AG04449 (cell line): ENCODE measurements at regions of chr6 and their contacts with region 1.

Region 1: GRCh38 chr6:9428421-9429172 is 986.3 kb downstream of the TFAP2A start:
- DNase-seq: no peak
- H3K4me3 ChIP-seq: no peak overlapping the region
- CTCF ChIP-seq: no peak

Region 2: DNA sequence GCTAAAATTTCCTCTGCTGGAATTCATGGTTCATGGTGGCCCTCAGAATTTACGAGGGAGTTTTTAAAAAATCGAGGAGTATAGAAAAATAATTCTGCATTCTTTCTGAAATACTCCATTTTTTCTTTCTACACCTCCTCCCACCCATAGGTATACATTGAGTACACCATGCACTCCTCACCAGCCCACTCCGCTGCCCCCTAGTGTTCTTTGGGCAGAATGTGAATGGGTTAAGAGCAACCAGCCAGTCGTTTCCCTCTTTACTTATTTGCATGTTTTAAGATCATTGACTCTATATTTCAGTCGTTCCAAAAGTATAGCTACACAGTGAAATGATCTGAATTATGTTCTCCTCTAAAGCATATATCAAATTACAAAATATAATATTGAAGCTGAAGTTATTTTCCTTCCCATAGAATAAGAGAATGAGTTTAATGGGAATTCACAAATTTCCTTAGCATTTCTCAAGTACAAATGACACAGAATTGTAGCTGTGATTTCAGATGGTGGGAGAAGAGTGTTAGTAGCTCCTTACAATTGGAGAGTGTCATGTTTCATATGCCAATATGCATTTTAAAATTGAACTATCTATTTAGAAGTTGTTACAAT is 15.5 kb before region 1 on chr6:
- CTCF ChIA-PET with region 1: interaction called, 11 read pairs
- POLR2A ChIA-PET with region 1: no interaction called
- DNase-seq: no peak
- H3K4me3 ChIP-seq: no peak overlapping the region
- CTCF ChIP-seq: peak; percentile 33

Region 3: DNA sequence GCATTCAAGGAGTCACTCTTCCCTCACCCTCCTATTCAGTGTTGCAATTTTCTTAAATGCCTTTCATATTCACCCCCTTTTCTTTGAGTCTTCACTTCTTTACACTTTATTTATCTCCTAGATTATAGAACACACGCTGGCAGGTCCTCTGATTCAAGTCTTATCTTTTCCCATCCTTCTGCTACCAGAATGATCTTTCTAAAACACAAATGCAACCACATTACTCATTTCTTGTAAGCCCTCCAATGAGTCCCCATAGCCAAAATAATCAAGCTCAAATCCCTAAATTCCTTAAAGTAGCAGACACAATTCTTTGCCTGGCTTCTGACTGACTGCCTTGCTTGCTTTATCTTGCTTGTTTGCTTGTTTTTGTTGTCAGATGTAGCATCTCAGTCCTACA is 66.3 kb after region 1 on chr6:
- CTCF ChIA-PET with region 1: no interaction called
- POLR2A ChIA-PET with region 1: no interaction called
- DNase-seq: no peak
- H3K4me3 ChIP-seq: no peak overlapping the region
- CTCF ChIP-seq: no peak

Region 4: GRCh38 chr6:9583753-9584352 is 155.3 kb after region 1 on chr6:
- CTCF ChIA-PET with region 1: no interaction called
- POLR2A ChIA-PET with region 1: no interaction called
- DNase-seq: no peak
- H3K4me3 ChIP-seq: no peak overlapping the region
- CTCF ChIP-seq: no peak

Region 5: DNA sequence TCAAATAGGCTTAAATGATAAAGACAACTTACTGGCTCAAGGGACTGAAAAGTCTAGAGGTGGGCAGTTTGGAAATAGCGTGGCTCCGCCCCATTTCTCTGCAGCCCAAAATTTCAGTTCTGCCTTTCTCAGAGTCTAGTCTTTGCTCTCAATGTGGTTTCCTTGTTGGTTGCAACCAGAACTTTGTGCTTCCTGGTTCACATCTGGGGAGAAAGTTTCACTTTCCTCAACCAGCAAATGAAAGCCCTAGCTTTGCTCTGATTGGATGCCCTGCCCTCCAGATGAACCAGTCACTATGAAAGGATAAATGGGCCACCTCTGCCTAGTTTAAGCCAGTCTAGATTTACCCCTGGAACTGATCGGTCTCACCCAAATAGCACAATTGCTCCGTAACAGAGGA is 1473.2 kb after region 1 on chr6:
- CTCF ChIA-PET with region 1: no interaction called
- POLR2A ChIA-PET with region 1: no interaction called
- DNase-seq: no peak
- H3K4me3 ChIP-seq: no peak overlapping the region
- CTCF ChIP-seq: no peak